GM12878 (cell line): ENCODE measurements at regions of chr16 and their contacts with region 1.

Region 1: DNA sequence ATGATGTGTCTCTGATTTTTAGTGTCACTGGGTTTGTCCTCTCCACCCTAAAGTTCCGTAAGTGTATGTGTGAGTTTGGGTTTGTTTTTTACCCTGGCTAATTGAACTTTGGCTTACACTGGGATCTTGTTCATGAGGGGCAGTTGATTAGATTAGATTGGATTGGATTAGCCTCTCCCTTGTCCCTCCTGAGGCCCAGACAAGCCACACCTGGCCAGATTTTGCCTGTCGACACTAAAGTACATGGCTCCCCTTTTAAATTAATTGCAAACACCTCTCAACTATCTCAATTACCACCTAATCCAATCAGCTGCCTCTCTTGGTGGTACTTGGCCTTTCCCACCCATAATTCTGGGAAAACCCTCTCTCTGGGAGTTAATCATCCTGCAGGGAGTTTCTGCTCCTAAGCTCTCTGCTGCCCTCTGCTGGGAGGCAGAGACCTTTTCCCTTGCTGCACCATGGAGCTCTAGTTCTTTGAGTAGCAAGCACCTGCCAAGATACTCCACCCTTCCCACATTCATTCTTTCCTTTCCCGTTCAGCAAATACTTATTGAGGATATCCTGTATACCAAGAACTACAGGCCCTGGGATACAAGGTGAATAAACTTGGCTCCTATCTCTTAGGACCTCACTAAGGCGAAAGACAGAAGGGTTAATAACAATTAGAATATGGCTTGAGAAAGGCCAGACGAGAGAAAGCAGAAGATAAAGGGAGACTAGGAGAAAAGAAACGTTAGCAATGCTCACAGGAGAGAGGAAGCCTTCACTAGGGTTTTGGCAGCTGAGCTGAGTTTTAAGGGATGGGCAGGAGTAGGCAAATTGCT is 60.0 kb upstream of the MPHOSPH6 start:
- DNase-seq: peak; percentile 3
- ATAC-seq: peak; percentile 75
- H3K4me3 ChIP-seq: no peak overlapping the region
- H3K27ac ChIP-seq: no peak overlapping the region
- H3K4me1 ChIP-seq: no peaks in the 10 kb centered on the region
- H3K27me3 ChIP-seq: peaks cover 0 to 3% of the 10 kb centered on the region in 2 experiments; a peak in 2 of 4 replicates
- CTCF ChIP-seq: peak; percentile 84 to 93 (median 85)
- EP300 ChIP-seq: no peak
- POLR2A ChIP-seq: no peak
- RAD21 ChIP-seq: peak; percentile 72

Region 2: GRCh38 chr16:81885976-81886586 is 343.9 kb before region 1 on chr16:
- CTCF ChIA-PET with region 1: interaction called, 4 read pairs
- POLR2A ChIA-PET with region 1: no interaction called
- RAD21 ChIA-PET with region 1: no interaction called
- SMC1A ChIA-PET with region 1: no interaction called
- in situ Hi-C with region 1: no loop called
- intact Hi-C with region 1: loop called (anchors 1 kb)
- DNase-seq: no peak
- ATAC-seq: peak; percentile 91
- H3K4me3 ChIP-seq: no peak overlapping the region
- H3K27ac ChIP-seq: no peak overlapping the region
- H3K4me1 ChIP-seq: no peaks in the 10 kb centered on the region
- H3K27me3 ChIP-seq: no peaks in the 10 kb centered on the region
- CTCF ChIP-seq: peak; percentile 68 to 71 (median 68); a peak in 5 of 6 replicates
- EP300 ChIP-seq: no peak
- POLR2A ChIP-seq: no peak
- RAD21 ChIP-seq: peak; percentile 54

Region 3: DNA sequence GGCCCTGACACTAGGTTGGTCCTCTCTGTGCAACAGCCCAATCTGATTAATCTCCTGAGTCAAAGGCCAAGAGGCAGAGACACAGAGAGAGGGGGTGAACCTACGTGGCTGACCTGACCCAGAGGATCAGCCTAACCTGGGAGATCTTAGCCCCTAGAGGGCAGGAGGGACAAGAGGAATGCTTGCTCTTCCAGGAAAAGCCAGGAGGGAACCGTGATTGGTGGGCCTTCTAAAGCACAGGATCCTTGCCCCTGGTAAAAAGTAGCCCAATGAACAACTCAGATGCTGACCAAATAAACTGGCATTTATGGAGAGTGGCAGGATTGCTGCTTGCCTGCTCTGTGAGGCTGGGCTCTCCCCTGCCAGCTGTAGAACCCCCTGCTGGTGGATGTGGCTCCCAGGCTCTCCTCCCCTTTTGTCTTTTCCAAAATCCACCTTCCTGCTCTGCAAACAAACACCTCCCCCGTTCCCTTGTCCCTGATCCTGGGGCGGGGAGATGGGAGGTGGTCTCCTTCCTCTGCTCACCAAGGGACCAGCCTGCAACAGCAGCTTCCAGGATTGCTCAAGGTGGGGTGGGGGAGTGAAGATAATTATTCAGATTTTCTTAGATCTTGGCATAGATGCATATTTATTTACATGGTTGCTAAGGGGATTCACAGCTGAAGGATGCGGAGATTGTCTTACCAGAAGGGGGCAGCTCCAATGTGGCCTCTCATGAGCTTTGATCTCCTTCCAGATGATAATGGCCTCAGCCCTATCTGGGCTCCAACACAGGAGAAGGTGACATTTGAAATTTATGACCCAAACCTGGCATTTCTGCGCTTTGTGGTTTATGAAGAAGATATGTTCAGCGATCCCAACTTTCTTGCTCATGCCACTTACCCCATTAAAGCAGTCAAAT is 290.6 kb before region 1 on chr16:
- CTCF ChIA-PET with region 1: interaction called, 4 read pairs
- POLR2A ChIA-PET with region 1: no interaction called
- RAD21 ChIA-PET with region 1: no interaction called
- SMC1A ChIA-PET with region 1: interaction called, 3 read pairs
- in situ Hi-C with region 1: no loop called
- intact Hi-C with region 1: loop called (anchors 5 kb)
- DNase-seq: no peak
- ATAC-seq: no peak
- H3K4me3 ChIP-seq: no peak overlapping the region
- H3K27ac ChIP-seq: no peak overlapping the region
- H3K4me1 ChIP-seq: no peaks in the 10 kb centered on the region
- H3K27me3 ChIP-seq: no peaks in the 10 kb centered on the region
- CTCF ChIP-seq: no peak
- EP300 ChIP-seq: no peak
- POLR2A ChIP-seq: peak; percentile 26; the same call in 1 of the 2 replicates
- RAD21 ChIP-seq: no peak

Region 4: DNA sequence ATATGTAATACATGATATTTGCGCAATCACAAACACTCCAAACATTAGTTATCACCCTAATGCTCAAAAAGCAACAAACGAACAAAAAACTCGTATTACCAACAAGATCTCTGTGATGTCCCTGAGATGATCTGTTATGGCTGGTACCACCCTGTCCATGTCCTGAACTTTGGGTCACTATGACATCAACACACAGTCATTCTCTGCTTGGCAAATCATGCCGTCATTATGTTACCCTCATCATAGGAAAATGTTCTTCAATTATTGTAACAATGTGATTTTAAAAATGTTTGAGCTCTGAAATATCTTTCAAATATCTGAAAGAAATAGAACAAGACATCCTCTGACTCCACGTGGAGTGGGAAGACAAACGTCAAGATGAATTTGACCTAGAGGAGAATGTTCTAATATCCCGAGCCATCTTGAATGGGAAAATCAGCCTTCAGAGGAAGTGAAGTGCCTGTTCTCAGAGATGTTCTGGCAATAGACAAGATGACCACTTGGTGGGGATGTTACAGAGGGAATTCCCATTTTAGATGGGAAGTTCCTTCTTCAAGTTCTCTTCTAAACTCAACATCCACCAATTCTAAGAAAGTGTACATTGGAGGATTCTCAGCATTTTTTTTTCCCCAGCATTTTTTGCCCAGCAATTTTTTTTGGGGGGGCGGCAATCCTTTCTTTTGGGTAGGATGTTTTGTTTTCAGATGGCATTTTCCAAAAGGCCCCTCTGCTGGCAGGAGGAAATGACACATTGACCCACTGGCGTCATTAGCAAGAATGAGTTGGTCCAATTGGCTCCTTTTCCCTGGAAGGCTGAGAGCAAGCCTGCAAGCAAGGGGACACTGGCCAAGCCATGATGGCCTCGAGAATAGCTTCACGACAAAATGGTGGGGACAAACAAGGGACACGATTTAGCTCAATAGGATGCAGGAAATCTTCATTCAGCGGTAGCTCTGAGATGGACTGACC is 198.6 kb before region 1 on chr16:
- CTCF ChIA-PET with region 1: interaction called, 4 read pairs
- POLR2A ChIA-PET with region 1: no interaction called
- RAD21 ChIA-PET with region 1: interaction called, 5 read pairs
- SMC1A ChIA-PET with region 1: no interaction called
- in situ Hi-C with region 1: no loop called
- intact Hi-C with region 1: loop called (anchors 1 kb)
- DNase-seq: no peak
- ATAC-seq: no peak
- H3K4me3 ChIP-seq: no peak overlapping the region
- H3K27ac ChIP-seq: no peak overlapping the region
- H3K4me1 ChIP-seq: no peaks in the 10 kb centered on the region
- H3K27me3 ChIP-seq: peaks cover 0 to 3% of the 10 kb centered on the region in 2 experiments; a peak in 2 of 4 replicates
- CTCF ChIP-seq: peak; percentile 30 to 43 (median 41); a peak in 5 of 6 replicates
- EP300 ChIP-seq: no peak
- POLR2A ChIP-seq: no peak
- RAD21 ChIP-seq: peak; percentile 50

Region 5: DNA sequence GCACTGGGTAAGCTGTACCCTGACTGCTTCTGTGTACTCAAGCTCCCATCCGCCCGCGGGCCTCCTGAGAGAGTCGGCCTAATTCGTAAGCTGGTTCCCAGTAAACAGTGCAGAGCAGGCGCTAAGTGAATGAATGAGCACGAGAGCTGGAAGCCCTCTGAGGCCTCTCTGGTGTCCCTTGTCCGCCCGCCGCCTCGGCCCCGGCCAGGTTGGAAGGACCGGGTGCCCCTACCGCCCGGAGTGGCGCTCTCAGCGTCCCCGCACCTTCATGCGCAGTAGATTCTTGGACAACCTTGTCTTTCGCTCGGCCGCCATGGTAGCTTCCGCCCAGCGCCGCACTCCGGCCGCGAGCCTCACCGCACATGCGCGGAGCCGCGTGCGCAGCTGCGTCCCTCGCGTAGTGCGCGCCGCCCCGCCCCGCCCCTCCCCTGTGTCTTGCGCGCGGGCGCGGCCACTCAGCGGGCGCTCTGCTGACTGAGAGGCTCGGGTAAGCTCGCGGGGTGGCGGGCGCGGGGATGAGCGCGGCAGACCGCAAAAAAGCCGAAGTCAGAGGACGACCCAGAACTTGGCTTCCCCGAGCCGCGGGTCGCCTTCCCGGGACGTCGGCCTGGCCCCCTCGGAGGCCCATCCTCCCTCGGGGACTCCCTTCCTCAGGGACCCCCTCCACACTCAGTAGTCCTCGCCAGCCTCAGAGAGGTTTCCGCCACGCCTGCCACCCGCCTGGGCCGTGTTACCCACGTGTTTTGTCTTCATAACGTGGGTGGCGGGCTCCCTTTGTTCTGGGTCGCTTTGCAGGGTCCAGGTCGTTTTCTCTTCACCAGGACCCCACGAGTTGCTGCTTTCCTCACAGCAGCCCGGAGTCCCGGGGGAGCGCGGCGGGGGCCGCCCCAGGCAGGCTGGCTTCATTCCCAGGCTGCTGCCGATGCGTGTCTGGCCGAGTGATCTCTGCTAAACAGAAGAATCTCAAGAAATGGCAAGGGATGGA is 59.9 kb before region 1 on chr16 and contains the start of gene MPHOSPH6:
- CTCF ChIA-PET with region 1: interaction called, 11 read pairs
- POLR2A ChIA-PET with region 1: no interaction called
- RAD21 ChIA-PET with region 1: interaction called, 4 read pairs
- SMC1A ChIA-PET with region 1: no interaction called
- in situ Hi-C with region 1: no loop called
- intact Hi-C with region 1: no loop called
- DNase-seq: peak; percentile 41
- ATAC-seq: peak; percentile 100
- H3K4me3 ChIP-seq: peak within 1 kb of the TSS; percentile 85
- H3K27ac ChIP-seq: no peak within 1 kb of the TSS
- H3K4me1 ChIP-seq: peaks cover 4% of the 10 kb centered on the region
- H3K27me3 ChIP-seq: peaks cover 2 to 4% of the 10 kb centered on the region in 2 experiments; a peak in 3 of 4 replicates
- CTCF ChIP-seq: no peak
- EP300 ChIP-seq: no peak
- POLR2A ChIP-seq: peak; percentile 82
- RAD21 ChIP-seq: no peak
- polyA plus RNA-seq, gene MPHOSPH6: 34.9 to 39.6 TPM